ENCODE measurements at regions of chrX and their contacts with region 1.

Region 1: GRCh38 chrX:77910108-77910840 is at the start of gene ATP7A:
- DNase-seq: peak; percentile 77 to 95 (median 86)
- ATAC-seq: peak; percentile 90
- H3K4me3 ChIP-seq: peak within 1 kb of the TSS; percentile 80
- H3K4me3 Mint-ChIP-seq: peak within 1 kb of the TSS; percentile 97
- H3K27ac ChIP-seq: peak within 1 kb of the TSS; percentile 77 to 82
- H3K27ac Mint-ChIP-seq: peak within 1 kb of the TSS; percentile 93
- H3K4me1 ChIP-seq: peaks cover 3% of the 10 kb centered on the region
- H3K4me1 Mint-ChIP-seq: peaks cover 29% of the 10 kb centered on the region
- H3K27me3 ChIP-seq: no peaks in the 10 kb centered on the region
- H3K27me3 Mint-ChIP-seq: no peaks in the 10 kb centered on the region
- CTCF ChIP-seq: peak; percentile 55
- total RNA-seq, gene ATP7A: 12.1 to 12.8 TPM

Region 2: DNA sequence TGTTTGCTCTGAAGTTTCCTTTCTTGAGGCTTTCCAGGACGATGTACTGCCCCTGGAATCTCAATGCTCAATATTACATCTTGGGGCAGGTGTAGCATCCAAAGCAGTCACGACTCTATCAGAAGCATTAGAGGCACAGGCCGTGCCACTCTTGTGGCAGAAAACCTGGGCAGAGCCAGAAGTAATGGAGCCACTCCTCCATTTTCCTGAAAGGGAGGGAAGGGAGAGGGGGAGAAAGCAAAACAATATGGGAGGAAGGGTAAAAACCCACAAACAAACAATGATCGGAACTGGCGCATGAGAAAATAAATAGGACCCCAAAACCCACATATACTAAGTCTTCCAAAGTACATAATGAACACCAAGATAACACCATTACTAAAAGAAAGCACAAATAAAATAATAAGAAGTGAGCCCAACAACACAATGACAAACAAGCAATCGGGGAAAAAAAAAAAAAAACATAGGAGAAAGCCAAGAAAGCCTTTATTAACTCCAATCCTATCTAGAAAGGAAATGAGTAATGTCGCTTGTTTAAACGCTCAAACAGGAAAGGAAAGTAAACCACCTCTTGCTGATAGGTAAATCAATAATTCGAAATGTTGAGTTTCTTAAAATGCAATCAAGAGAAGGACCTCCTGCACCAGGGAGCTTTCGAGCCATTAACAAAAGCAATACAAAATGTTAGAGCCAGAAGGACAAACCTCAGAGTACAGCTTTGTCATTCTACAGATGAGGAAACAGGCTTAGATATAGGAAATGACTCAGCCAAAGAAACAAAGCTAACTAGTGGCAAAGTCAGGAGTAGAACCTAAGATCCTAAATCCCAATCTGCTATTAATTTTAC is 241.7 kb before region 1 on chrX:
- CTCF ChIA-PET with region 1: no interaction called
- POLR2A ChIA-PET with region 1: no interaction called
- intact Hi-C with region 1: no loop called
- DNase-seq: peak in 1 of 14 experiments; percentile 1
- ATAC-seq: no peak
- H3K4me3 ChIP-seq: no peak overlapping the region
- H3K4me3 Mint-ChIP-seq: no peak overlapping the region
- H3K27ac ChIP-seq: no peak overlapping the region
- H3K27ac Mint-ChIP-seq: peak overlapping the region; percentile 52
- H3K4me1 ChIP-seq: no peaks in the 10 kb centered on the region
- H3K4me1 Mint-ChIP-seq: peaks cover 10% of the 10 kb centered on the region
- H3K27me3 ChIP-seq: no peaks in the 10 kb centered on the region
- H3K27me3 Mint-ChIP-seq: no peaks in the 10 kb centered on the region
- CTCF ChIP-seq: no peak

Region 3: DNA sequence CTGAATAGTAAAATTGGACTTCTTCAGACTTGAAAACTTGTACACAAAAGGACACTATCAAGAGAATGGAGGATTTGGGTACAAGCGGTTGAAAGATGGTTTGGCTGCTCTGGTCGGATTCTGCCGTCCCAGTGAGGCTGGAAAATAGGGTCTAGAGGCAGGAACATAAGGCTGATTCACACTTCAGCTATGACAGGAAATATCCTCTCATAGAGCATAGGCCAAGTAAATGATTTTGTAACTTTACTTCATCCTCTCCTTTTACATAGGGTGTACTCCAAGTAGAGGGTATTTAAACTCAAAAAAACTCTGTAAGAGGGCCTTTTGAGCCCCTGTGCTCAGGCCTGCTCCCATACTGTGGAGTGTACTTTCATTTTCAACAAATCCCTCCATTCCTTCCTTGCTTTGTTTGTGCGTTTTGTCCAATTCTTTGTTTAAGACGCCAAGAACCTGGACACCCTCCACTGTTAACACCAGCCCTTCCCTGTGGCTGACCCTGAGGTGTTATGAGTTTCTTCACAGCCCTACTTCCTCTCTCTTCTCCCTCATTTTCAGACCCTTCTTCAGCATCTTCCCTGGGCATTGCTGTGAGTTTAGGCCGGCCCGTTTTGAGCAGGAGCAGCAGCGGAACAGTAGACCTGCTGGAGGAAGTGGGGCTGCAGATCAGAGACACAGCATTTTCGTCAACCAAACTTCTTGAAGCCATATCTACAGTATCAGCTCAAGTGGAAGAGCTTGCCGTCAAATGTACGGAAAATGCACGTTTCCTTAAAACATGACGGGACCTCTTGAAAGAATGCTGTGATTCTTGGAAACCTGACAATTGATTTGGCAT is 52.0 kb after region 1 on chrX:
- CTCF ChIA-PET with region 1: no interaction called
- POLR2A ChIA-PET with region 1: no interaction called
- intact Hi-C with region 1: loop called in 1 of 2 experiments (anchors 10 kb)
- DNase-seq: peak in 7 of 14 experiments; percentile 0 to 40 (median 17)
- ATAC-seq: peak; percentile 84
- H3K4me3 ChIP-seq: peak overlapping the region; percentile 19
- H3K4me3 Mint-ChIP-seq: peak overlapping the region; percentile 85
- H3K27ac ChIP-seq: peak overlapping the region in 1 of 2 donors; percentile 48
- H3K27ac Mint-ChIP-seq: peak overlapping the region; percentile 89
- H3K4me1 ChIP-seq: peaks cover 3% of the 10 kb centered on the region
- H3K4me1 Mint-ChIP-seq: peaks cover 39% of the 10 kb centered on the region
- H3K27me3 ChIP-seq: no peaks in the 10 kb centered on the region
- H3K27me3 Mint-ChIP-seq: no peaks in the 10 kb centered on the region
- CTCF ChIP-seq: no peak

Region 4: GRCh38 chrX:78024349-78025108 is 114.3 kb after region 1 on chrX:
- CTCF ChIA-PET with region 1: interaction called, 11 read pairs
- POLR2A ChIA-PET with region 1: interaction called, 13 read pairs
- intact Hi-C with region 1: loop called (anchors 1 to 2 kb)
- DNase-seq: peak in 9 of 14 experiments; percentile 0 to 71 (median 13)
- ATAC-seq: peak; percentile 94
- H3K4me3 ChIP-seq: no peak overlapping the region
- H3K4me3 Mint-ChIP-seq: no peak overlapping the region
- H3K27ac ChIP-seq: no peak overlapping the region
- H3K27ac Mint-ChIP-seq: no peak overlapping the region
- H3K4me1 ChIP-seq: no peaks in the 10 kb centered on the region
- H3K4me1 Mint-ChIP-seq: peaks cover 3% of the 10 kb centered on the region
- H3K27me3 ChIP-seq: no peaks in the 10 kb centered on the region
- H3K27me3 Mint-ChIP-seq: no peaks in the 10 kb centered on the region
- CTCF ChIP-seq: peak; percentile 68